GM23248 (cell line): ENCODE measurements at regions of chr16 and their contacts with region 1.

Region 1: DNA sequence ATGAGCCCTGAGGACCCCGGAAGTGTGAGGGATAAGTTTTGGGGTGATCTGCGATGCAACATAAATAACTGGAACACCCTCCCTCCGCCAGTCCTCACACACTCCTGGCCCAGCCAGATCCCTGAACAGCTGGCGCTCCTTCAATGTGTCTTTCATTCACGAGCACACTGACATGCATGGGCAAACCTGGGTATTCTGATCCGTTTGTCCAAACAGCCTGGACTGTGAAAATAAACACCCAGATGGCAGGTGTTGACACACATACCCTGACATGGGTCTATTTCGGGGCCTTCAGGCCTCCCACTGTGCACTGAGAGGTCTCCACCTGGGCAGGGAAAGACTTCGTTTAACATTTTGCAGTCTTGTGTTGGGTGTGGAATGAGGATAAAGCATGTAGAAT is 3.0 kb upstream of the CPNE2 start:
- DNase-seq: no peak
- H3K4me3 ChIP-seq: no peak overlapping the region
- H3K27ac ChIP-seq: no peak overlapping the region
- H3K4me1 ChIP-seq: no peaks in the 10 kb centered on the region
- H3K27me3 ChIP-seq: no peaks in the 10 kb centered on the region

Region 2: DNA sequence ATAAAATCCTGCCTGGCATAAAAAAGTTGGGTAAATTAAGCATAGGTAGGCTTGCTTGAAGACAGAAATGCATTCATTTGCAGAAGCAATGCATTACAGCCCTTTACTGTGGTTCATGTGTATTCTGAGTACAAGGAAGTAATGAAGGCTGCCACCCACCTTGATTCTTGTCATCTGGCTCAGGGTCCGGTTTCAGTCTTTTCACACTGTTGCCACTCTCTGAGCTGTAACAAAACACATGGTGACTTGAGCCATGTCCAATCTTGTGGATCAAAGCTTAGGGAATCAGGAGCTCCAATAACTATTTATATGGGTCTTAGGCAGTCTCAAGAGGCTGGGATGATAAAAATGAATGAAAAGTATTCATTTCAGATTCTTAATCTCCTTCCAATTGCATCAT is 74.4 kb after region 1 on chr16:
- in situ Hi-C with region 1: loop called (anchors 5 kb)
- DNase-seq: no peak
- H3K4me3 ChIP-seq: no peak overlapping the region
- H3K27ac ChIP-seq: no peak overlapping the region
- H3K4me1 ChIP-seq: no peaks in the 10 kb centered on the region
- H3K27me3 ChIP-seq: no peaks in the 10 kb centered on the region